CD4-positive, alpha-beta memory T cell (primary cell): ENCODE measurements at regions of chr15 and their contacts with region 1.

Region 1: GRCh38 chr15:99755692-99756409 is 22.6 kb upstream of the LYSMD4 start:
- DNase-seq: peak in 4 of 5 donors; percentile 56 to 67 (median 60)
- H3K4me3 ChIP-seq: no peak overlapping the region
- H3K4me3 Mint-ChIP-seq: no peak overlapping the region
- H3K27ac ChIP-seq: no peak overlapping the region
- H3K27ac Mint-ChIP-seq: no peak overlapping the region
- H3K4me1 ChIP-seq: no peaks in the 10 kb centered on the region
- H3K4me1 Mint-ChIP-seq: peaks cover 0 to 5% (median 1%) of the 10 kb centered on the region in 4 donors
- H3K27me3 ChIP-seq: no peaks in the 10 kb centered on the region
- H3K27me3 Mint-ChIP-seq: peaks cover 0 to 4% of the 10 kb centered on the region in 2 donors

Region 2: GRCh38 chr15:99104788-99105513 is 650.9 kb before region 1 on chr15 and contains the start of gene SYNM:
- CTCF ChIA-PET with region 1: interaction called, 4 read pairs
- POLR2A ChIA-PET with region 1: no interaction called
- intact Hi-C with region 1: loop called (anchors 2 kb)
- DNase-seq: peak in 3 of 5 donors; percentile 13 to 20 (median 16)
- H3K4me3 ChIP-seq: peak within 1 kb of the TSS in 1 of 2 donors; percentile 9
- H3K4me3 Mint-ChIP-seq: peak within 1 kb of the TSS; percentile 54 to 81 (median 60)
- H3K27ac ChIP-seq: no peak within 1 kb of the TSS
- H3K27ac Mint-ChIP-seq: peak within 1 kb of the TSS in 2 of 7 donors; percentile 21 to 65
- H3K4me1 ChIP-seq: peaks cover 10% of the 10 kb centered on the region
- H3K4me1 Mint-ChIP-seq: peaks cover 8 to 37% (median 19%) of the 10 kb centered on the region in 4 donors
- H3K27me3 ChIP-seq: peaks cover 13% of the 10 kb centered on the region
- H3K27me3 Mint-ChIP-seq: peaks cover 20 to 32% of the 10 kb centered on the region in 2 donors
- total RNA-seq, gene SYNM: 13.7 to 14.2 TPM

Region 3: GRCh38 chr15:99275525-99276128 is 480.2 kb before region 1 on chr15:
- CTCF ChIA-PET with region 1: interaction called, 126 read pairs
- POLR2A ChIA-PET with region 1: no interaction called
- intact Hi-C with region 1: loop called (anchors 1 kb)
- DNase-seq: no peak
- H3K4me3 ChIP-seq: no peak overlapping the region
- H3K4me3 Mint-ChIP-seq: no peak overlapping the region
- H3K27ac ChIP-seq: no peak overlapping the region
- H3K27ac Mint-ChIP-seq: no peak overlapping the region
- H3K4me1 ChIP-seq: no peaks in the 10 kb centered on the region
- H3K4me1 Mint-ChIP-seq: peaks cover 7 to 14% (median 13%) of the 10 kb centered on the region in 4 donors
- H3K27me3 ChIP-seq: no peaks in the 10 kb centered on the region
- H3K27me3 Mint-ChIP-seq: no peaks in the 10 kb centered on the region

Region 4: DNA sequence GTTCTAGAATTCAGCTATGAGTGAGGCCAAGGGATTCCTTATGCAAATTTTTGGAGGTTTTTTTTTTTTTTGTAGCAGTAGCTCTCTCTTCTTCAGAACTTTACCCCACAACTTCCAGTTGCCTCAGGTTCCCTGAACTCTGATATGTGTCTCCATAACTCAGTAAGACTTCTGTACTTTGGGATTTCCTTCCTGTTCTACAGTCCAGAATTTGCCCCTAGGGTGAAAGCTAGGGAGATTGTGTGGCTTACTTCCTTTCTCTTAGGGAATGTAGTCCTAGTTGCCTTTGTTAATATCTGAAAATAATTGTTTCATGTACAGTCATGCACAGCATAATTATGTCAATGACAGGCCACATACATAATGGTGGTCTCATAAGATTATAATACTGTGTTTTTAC is 473.7 kb before region 1 on chr15:
- CTCF ChIA-PET with region 1: interaction called, 7 read pairs
- POLR2A ChIA-PET with region 1: no interaction called
- intact Hi-C with region 1: loop called (anchors 5 kb)
- DNase-seq: no peak
- H3K4me3 ChIP-seq: no peak overlapping the region
- H3K4me3 Mint-ChIP-seq: no peak overlapping the region
- H3K27ac ChIP-seq: no peak overlapping the region
- H3K27ac Mint-ChIP-seq: no peak overlapping the region
- H3K4me1 ChIP-seq: no peaks in the 10 kb centered on the region
- H3K4me1 Mint-ChIP-seq: peaks cover 7 to 25% (median 15%) of the 10 kb centered on the region in 4 donors
- H3K27me3 ChIP-seq: no peaks in the 10 kb centered on the region
- H3K27me3 Mint-ChIP-seq: no peaks in the 10 kb centered on the region

Region 5: DNA sequence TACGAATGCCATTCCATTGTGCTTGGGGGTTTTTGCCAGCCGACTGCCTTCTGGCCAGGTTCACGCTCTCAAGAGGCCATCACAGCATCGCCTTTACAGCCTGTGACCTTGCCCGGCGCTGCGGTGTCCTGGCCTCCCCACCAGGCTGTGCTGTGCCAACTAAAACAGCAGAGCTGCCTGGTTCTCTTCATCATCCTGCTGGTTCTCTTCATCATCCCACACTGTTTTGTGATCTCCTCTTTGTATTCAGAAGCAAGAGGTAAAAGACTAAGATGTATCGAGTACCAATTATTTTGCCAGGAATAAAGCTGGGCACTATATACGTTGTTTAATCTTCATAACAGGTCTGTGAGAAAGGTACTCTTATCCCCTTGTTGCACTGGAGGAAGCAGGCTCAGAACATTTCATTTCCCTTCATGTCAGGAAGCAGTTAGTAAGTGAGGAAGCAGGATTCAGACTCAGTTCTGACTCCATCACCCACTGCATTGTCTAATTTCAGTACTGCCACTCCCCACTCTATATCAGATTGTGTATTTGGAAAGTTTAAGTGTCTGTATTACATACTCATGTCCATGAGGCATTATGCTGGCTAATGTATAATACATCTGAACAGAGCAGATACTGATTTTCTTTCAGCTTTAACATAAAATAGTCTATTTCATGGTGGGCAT is 411.8 kb before region 1 on chr15:
- CTCF ChIA-PET with region 1: interaction called, 7 read pairs
- POLR2A ChIA-PET with region 1: no interaction called
- intact Hi-C with region 1: loop called (anchors 2 kb)
- DNase-seq: peak in 4 of 5 donors; percentile 17 to 33 (median 20)
- H3K4me3 ChIP-seq: no peak overlapping the region
- H3K4me3 Mint-ChIP-seq: no peak overlapping the region
- H3K27ac ChIP-seq: no peak overlapping the region
- H3K27ac Mint-ChIP-seq: peak overlapping the region in 1 of 7 donors; percentile 4
- H3K4me1 ChIP-seq: no peaks in the 10 kb centered on the region
- H3K4me1 Mint-ChIP-seq: peaks cover 0 to 4% (median 1%) of the 10 kb centered on the region in 4 donors
- H3K27me3 ChIP-seq: no peaks in the 10 kb centered on the region
- H3K27me3 Mint-ChIP-seq: no peaks in the 10 kb centered on the region

Region 6: DNA sequence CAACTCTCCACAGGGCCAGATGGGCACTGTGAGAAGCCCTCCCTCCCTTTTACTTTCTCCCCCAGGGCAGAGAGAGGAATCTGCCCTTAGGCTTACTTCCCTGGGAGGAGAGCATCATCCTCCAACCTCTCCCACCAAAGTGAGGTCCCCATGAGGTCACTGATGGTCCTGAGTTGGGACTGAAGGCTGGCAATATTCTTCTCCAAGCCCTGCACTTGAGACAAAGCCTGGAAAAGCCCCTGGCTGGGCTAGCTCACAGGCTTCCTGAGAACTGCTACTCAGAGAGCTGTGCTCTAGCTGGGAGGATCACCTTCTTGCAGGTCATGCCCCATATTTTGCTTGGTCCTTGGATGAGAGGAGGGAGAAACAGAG is 300.1 kb before region 1 on chr15:
- CTCF ChIA-PET with region 1: no interaction called
- POLR2A ChIA-PET with region 1: no interaction called
- intact Hi-C with region 1: no loop called
- DNase-seq: no peak
- H3K4me3 ChIP-seq: no peak overlapping the region
- H3K4me3 Mint-ChIP-seq: no peak overlapping the region
- H3K27ac ChIP-seq: no peak overlapping the region
- H3K27ac Mint-ChIP-seq: no peak overlapping the region
- H3K4me1 ChIP-seq: peaks cover 8% of the 10 kb centered on the region
- H3K4me1 Mint-ChIP-seq: peaks cover 8 to 12% (median 10%) of the 10 kb centered on the region in 4 donors
- H3K27me3 ChIP-seq: no peaks in the 10 kb centered on the region
- H3K27me3 Mint-ChIP-seq: peaks cover 2 to 3% of the 10 kb centered on the region in 2 donors

Region 7: DNA sequence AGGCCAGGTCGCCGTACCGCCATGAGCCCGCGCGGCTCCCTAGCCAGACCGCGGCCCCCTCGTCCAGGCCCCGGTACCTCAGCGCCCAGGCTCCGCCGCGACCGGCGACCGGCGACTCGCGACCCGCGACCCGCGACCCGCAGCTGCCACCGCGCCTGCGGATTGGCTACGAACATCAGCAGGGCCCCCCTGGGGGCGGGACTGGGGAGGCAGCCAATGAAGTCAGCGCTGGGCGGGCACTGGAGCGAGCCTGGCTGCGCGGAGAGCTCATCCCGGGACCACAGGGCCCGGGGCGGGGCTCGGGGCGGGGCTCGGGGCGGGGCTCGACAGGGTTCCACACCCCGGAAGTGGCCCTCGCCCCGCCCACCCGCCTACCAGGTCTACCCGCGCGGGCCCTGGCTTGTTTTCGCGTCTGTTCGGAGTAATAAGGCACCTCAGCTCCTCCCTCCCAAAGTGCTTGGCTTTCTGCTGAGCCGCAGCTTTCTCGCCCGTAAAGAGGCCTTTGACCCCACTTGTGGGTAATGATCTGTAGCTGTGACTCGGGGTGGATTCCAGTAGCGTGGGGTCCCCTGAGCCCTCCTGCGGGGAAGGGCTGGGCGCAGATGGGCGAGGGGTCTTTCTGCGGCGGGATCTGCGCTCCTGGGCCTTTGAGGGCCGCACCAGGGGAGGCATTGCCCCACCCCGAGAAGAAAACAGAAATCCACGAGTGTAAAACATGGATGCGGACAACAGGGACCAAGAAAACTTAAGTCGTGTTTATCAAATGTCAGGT is 22.4 kb before region 1 on chr15 and contains the start of gene LYSMD4:
- CTCF ChIA-PET with region 1: interaction called, 16 read pairs
- POLR2A ChIA-PET with region 1: no interaction called
- intact Hi-C with region 1: no loop called
- DNase-seq: peak; percentile 95 to 97 (median 96)
- H3K4me3 ChIP-seq: peak within 1 kb of the TSS; percentile 6 to 67
- H3K4me3 Mint-ChIP-seq: peak within 1 kb of the TSS; percentile 83 to 95 (median 87)
- H3K27ac ChIP-seq: peak within 1 kb of the TSS; percentile 46
- H3K27ac Mint-ChIP-seq: peak within 1 kb of the TSS; percentile 80 to 97 (median 88)
- H3K4me1 ChIP-seq: peaks cover 14% of the 10 kb centered on the region
- H3K4me1 Mint-ChIP-seq: peaks cover 12 to 24% (median 16%) of the 10 kb centered on the region in 4 donors
- H3K27me3 ChIP-seq: no peaks in the 10 kb centered on the region
- H3K27me3 Mint-ChIP-seq: no peaks in the 10 kb centered on the region
- total RNA-seq, gene LYSMD4: 18.0 to 19.0 TPM

Region 8: DNA sequence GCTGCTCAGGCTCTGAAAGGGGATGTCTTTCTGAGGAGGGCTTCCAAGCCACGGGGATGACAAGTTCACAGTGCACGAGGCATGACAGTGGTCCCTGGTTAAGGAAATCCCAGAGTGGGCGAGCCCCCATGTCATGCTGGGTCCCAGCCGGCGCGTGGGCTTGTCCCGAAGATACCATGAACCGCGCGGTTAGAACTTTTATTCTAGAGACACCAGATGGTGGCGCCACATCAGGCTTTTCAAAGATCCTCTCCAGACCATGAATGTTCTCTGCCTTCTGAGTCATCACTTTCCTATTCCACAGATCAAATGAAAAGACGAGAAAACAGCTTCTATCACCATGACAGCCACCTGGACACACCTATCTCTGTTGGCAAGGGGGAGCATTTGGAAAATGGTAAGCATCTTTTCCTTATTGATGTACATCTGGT is 205.2 kb after region 1 on chr15:
- CTCF ChIA-PET with region 1: no interaction called
- POLR2A ChIA-PET with region 1: no interaction called
- intact Hi-C with region 1: no loop called
- DNase-seq: no peak
- H3K4me3 ChIP-seq: no peak overlapping the region
- H3K4me3 Mint-ChIP-seq: no peak overlapping the region
- H3K27ac ChIP-seq: no peak overlapping the region
- H3K27ac Mint-ChIP-seq: no peak overlapping the region
- H3K4me1 ChIP-seq: peaks cover 5% of the 10 kb centered on the region
- H3K4me1 Mint-ChIP-seq: peaks cover 6 to 7% (median 6%) of the 10 kb centered on the region in 4 donors
- H3K27me3 ChIP-seq: no peaks in the 10 kb centered on the region
- H3K27me3 Mint-ChIP-seq: peaks cover 4 to 18% of the 10 kb centered on the region in 2 donors